Activated T-helper 1 cell treated with anti-CD3 and anti-CD28 coated beads, Interleukin-12 subunit alpha, Interleukin-12 subunit beta, Interleukin-2, Interleukin-4 antibody, amounts not matched to agents 30 ng/mL and 10 ng/mL and 1 ng/mL, durations not matched to agents 14 hours and 24 hours and 36 hours (primary cell): ENCODE measurements at regions of chr18 and their contacts with region 1.

Region 1: DNA sequence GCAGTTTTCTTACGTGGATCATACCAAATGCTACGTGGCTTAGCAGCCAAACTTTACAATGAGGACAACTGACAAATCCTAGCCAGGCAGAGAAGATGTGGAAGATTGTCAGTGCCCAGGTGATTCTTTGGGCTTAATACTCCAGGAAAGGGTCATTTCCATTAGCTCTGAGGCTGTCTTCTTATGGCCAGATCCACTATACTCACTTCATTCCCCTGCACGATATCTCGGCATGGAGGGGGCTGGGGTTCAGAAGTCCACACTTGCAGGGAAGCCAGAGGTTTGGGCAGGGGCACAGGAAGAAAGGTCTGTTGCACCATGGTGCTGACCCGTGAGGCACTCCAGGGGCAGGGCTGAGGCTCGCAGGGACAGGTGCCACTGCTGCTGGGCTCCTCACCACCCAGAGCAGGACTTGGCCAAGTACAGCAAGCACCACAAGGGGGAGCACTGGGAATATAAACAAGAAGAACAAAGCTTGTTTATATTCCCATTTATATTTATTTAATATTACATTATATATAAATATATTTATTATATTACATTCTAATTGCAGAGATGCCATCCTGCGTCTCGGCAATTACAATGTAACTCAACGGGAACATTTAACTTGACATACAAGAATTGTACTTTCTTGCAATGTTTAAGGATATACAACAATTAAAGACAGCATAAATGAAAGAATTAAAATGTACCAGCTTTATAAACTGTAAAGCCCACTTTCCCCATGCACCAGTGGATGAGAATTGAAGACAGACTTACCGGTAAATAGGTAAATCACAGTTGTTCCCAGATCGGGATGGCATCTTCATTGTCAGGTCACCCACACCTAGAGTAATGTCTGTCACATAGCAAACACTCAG is 27.2 kb downstream of the CLUL1 start:
- DNase-seq: peak; percentile 41
- H3K4me3 Mint-ChIP-seq: no peak overlapping the region
- H3K27ac Mint-ChIP-seq: no peak overlapping the region
- H3K4me1 Mint-ChIP-seq: no peaks in the 10 kb centered on the region
- H3K27me3 Mint-ChIP-seq: peaks cover 34% of the 10 kb centered on the region

Region 2: GRCh38 chr18:658001-658946 is 34.3 kb after region 1 on chr18:
- intact Hi-C with region 1: loop called (anchors 2 kb)
- DNase-seq: peak; percentile 74
- H3K4me3 Mint-ChIP-seq: peak overlapping the region; percentile 96
- H3K27ac Mint-ChIP-seq: peak overlapping the region; percentile 93
- H3K4me1 Mint-ChIP-seq: peaks cover 39% of the 10 kb centered on the region
- H3K27me3 Mint-ChIP-seq: no peaks in the 10 kb centered on the region

Region 3: DNA sequence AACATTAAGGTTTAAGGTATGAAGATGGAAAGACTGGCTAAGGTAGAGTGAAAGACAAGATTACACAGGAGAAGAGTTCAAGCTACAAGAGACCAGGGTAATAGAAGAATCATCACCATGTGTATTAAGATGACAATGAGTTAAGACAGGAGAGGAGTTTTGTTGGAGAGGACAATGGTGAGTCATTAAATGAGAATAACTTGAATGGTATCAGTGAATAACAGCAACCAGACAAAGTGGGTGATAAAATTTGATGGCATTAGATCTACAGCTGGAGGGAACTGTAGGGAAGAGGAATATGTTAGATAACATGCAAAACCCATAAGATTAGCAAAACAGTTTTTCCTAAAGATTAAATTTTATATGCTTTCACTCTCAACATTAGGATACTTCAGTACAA is 107.2 kb after region 1 on chr18:
- intact Hi-C with region 1: loop called (anchors 5 kb)
- DNase-seq: no peak
- H3K4me3 Mint-ChIP-seq: no peak overlapping the region
- H3K27ac Mint-ChIP-seq: no peak overlapping the region
- H3K4me1 Mint-ChIP-seq: peaks cover 9% of the 10 kb centered on the region
- H3K27me3 Mint-ChIP-seq: no peaks in the 10 kb centered on the region

Region 4: DNA sequence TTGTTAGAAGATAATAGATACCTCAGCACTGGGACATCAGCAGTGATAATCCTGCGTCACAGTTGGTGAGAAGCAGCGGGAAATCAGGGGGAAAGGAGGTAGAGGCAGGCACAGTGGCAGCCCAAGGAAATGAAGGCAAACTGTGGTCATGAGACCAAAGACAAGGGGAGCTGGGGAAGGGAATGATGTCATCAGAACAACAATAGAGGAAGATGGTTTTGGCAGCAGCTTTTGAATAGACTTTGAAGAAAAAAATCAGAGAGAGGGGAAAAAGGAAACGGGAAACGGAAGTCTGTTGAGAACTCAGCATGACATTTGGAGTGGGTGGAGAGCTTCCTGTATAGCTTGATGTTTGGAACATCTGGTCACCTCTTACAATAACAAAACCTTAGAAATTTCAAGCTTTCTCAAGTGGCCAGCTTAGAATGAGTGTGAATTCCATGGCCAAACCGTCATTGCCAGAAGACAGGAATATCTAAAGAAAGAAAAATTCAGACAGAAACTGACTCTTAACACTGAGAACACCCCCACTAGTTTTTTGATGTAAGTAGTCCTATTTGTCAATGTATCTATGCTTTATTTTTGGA is 206.4 kb after region 1 on chr18:
- intact Hi-C with region 1: loop called (anchors 1 kb)
- DNase-seq: peak; percentile 9
- H3K4me3 Mint-ChIP-seq: no peak overlapping the region
- H3K27ac Mint-ChIP-seq: peak overlapping the region; percentile 49
- H3K4me1 Mint-ChIP-seq: peaks cover 12% of the 10 kb centered on the region
- H3K27me3 Mint-ChIP-seq: peaks cover 4% of the 10 kb centered on the region

Region 5: GRCh38 chr18:839224-840022 is 215.4 kb after region 1 on chr18:
- intact Hi-C with region 1: loop called (anchors 1 kb)
- DNase-seq: peak; percentile 75
- H3K4me3 Mint-ChIP-seq: no peak overlapping the region
- H3K27ac Mint-ChIP-seq: no peak overlapping the region
- H3K4me1 Mint-ChIP-seq: peaks cover 8% of the 10 kb centered on the region
- H3K27me3 Mint-ChIP-seq: peaks cover 10% of the 10 kb centered on the region

Region 6: GRCh38 chr18:1232867-1233266 is 608.9 kb after region 1 on chr18:
- intact Hi-C with region 1: no loop called
- DNase-seq: no peak
- H3K4me3 Mint-ChIP-seq: no peak overlapping the region
- H3K27ac Mint-ChIP-seq: no peak overlapping the region
- H3K4me1 Mint-ChIP-seq: no peaks in the 10 kb centered on the region
- H3K27me3 Mint-ChIP-seq: no peaks in the 10 kb centered on the region

Region 7: GRCh38 chr18:1604751-1605150 is 980.8 kb after region 1 on chr18:
- intact Hi-C with region 1: no loop called
- DNase-seq: no peak
- H3K4me3 Mint-ChIP-seq: no peak overlapping the region
- H3K27ac Mint-ChIP-seq: no peak overlapping the region
- H3K4me1 Mint-ChIP-seq: no peaks in the 10 kb centered on the region
- H3K27me3 Mint-ChIP-seq: no peaks in the 10 kb centered on the region